Naive thymus-derived CD4-positive, alpha-beta T cell (primary cell): ENCODE measurements at regions of chr17 and their contacts with region 1.

Region 1: GRCh38 chr17:18183334-18184142 is at the start of gene ALKBH5:
- DNase-seq: peak; percentile 97 to 99 (median 99)
- ATAC-seq: peak; percentile 88
- H3K4me3 ChIP-seq: peak within 1 kb of the TSS; percentile 78
- H3K4me3 Mint-ChIP-seq: peak within 1 kb of the TSS; percentile 83 to 99 (median 94)
- H3K27ac ChIP-seq: peak within 1 kb of the TSS; percentile 93
- H3K27ac Mint-ChIP-seq: peak within 1 kb of the TSS; percentile 96 to 99 (median 98)
- H3K4me1 ChIP-seq: peaks cover 36 to 40% of the 10 kb centered on the region in 2 donors
- H3K4me1 Mint-ChIP-seq: peaks cover 40 to 59% (median 46%) of the 10 kb centered on the region in 7 donors
- H3K27me3 ChIP-seq: no peaks in the 10 kb centered on the region
- H3K27me3 Mint-ChIP-seq: peaks cover 0 to 3% (median 0%) of the 10 kb centered on the region in 5 donors
- total RNA-seq, gene ALKBH5: 97.4 to 135 (median 108) TPM

Region 2: GRCh38 chr17:18087610-18088491 is 95.7 kb before region 1 on chr17 and contains the start of gene DRG2:
- CTCF ChIA-PET with region 1: no interaction called
- POLR2A ChIA-PET with region 1: interaction called, 3 read pairs
- intact Hi-C with region 1: loop called (anchors 1 kb)
- DNase-seq: peak; percentile 79 to 94 (median 85)
- ATAC-seq: peak; percentile 98
- H3K4me3 ChIP-seq: peak within 1 kb of the TSS; percentile 84
- H3K4me3 Mint-ChIP-seq: peak within 1 kb of the TSS; percentile 97 to 100 (median 98)
- H3K27ac ChIP-seq: peak within 1 kb of the TSS; percentile 85
- H3K27ac Mint-ChIP-seq: peak within 1 kb of the TSS; percentile 96 to 99 (median 98)
- H3K4me1 ChIP-seq: peaks cover 9 to 12% of the 10 kb centered on the region in 2 donors
- H3K4me1 Mint-ChIP-seq: peaks cover 19 to 35% (median 27%) of the 10 kb centered on the region in 7 donors
- H3K27me3 ChIP-seq: no peaks in the 10 kb centered on the region
- H3K27me3 Mint-ChIP-seq: no peaks in the 10 kb centered on the region
- total RNA-seq, gene DRG2: 39.6 to 54.7 (median 48.8) TPM

Region 3: GRCh38 chr17:18158022-18158600 is 25.4 kb before region 1 on chr17:
- CTCF ChIA-PET with region 1: no interaction called
- POLR2A ChIA-PET with region 1: interaction called, 29 read pairs
- intact Hi-C with region 1: loop called (anchors 1 kb)
- DNase-seq: peak; percentile 89 to 94 (median 93)
- ATAC-seq: peak; percentile 96
- H3K4me3 ChIP-seq: peak overlapping the region; percentile 78
- H3K4me3 Mint-ChIP-seq: peak overlapping the region; percentile 78 to 93 (median 85)
- H3K27ac ChIP-seq: peak overlapping the region; percentile 64
- H3K27ac Mint-ChIP-seq: peak overlapping the region; percentile 89 to 94 (median 91)
- H3K4me1 ChIP-seq: peaks cover 6 to 7% of the 10 kb centered on the region in 2 donors
- H3K4me1 Mint-ChIP-seq: peaks cover 0 to 19% (median 14%) of the 10 kb centered on the region in 7 donors
- H3K27me3 ChIP-seq: no peaks in the 10 kb centered on the region
- H3K27me3 Mint-ChIP-seq: peaks cover 0 to 2% (median 0%) of the 10 kb centered on the region in 5 donors

Region 4: GRCh38 chr17:18260332-18261144 is 77.0 kb after region 1 on chr17 and contains the start of gene MIEF2:
- CTCF ChIA-PET with region 1: no interaction called
- POLR2A ChIA-PET with region 1: interaction called, 3 read pairs
- intact Hi-C with region 1: loop called (anchors 1 kb)
- DNase-seq: peak; percentile 80 to 92 (median 91)
- ATAC-seq: peak; percentile 91
- H3K4me3 ChIP-seq: peak within 1 kb of the TSS; percentile 84
- H3K4me3 Mint-ChIP-seq: peak within 1 kb of the TSS; percentile 78 to 96 (median 84)
- H3K27ac ChIP-seq: peak within 1 kb of the TSS; percentile 95
- H3K27ac Mint-ChIP-seq: peak within 1 kb of the TSS; percentile 77 to 92 (median 84)
- H3K4me1 ChIP-seq: peaks cover 29 to 47% of the 10 kb centered on the region in 2 donors
- H3K4me1 Mint-ChIP-seq: peaks cover 11 to 57% (median 37%) of the 10 kb centered on the region in 7 donors
- H3K27me3 ChIP-seq: no peaks in the 10 kb centered on the region
- H3K27me3 Mint-ChIP-seq: no peaks in the 10 kb centered on the region
- total RNA-seq, gene MIEF2: 6.5 to 22.5 (median 15.1) TPM

Region 5: GRCh38 chr17:19977311-19978208 is 1794.0 kb after region 1 on chr17 and contains the start of gene AKAP10:
- CTCF ChIA-PET with region 1: no interaction called
- POLR2A ChIA-PET with region 1: no interaction called
- intact Hi-C with region 1: loop called in 1 of 2 experiments (anchors 5 kb)
- DNase-seq: peak; percentile 78 to 96 (median 86)
- ATAC-seq: peak; percentile 94
- H3K4me3 ChIP-seq: peak within 1 kb of the TSS; percentile 85
- H3K4me3 Mint-ChIP-seq: peak within 1 kb of the TSS; percentile 88 to 98 (median 96)
- H3K27ac ChIP-seq: peak within 1 kb of the TSS; percentile 78
- H3K27ac Mint-ChIP-seq: peak within 1 kb of the TSS; percentile 94 to 98 (median 96)
- H3K4me1 ChIP-seq: peaks cover 8 to 11% of the 10 kb centered on the region in 2 donors
- H3K4me1 Mint-ChIP-seq: peaks cover 28 to 55% (median 52%) of the 10 kb centered on the region in 7 donors
- H3K27me3 ChIP-seq: no peaks in the 10 kb centered on the region
- H3K27me3 Mint-ChIP-seq: no peaks in the 10 kb centered on the region
- total RNA-seq, gene AKAP10: 40.5 to 69.0 (median 51.0) TPM